Activated T-helper 1 cell treated with anti-CD3 and anti-CD28 coated beads, Interleukin-12 subunit alpha, Interleukin-12 subunit beta, Interleukin-2, Interleukin-4 antibody, amounts not matched to agents 30 ng/mL and 10 ng/mL and 1 ng/mL, durations not matched to agents 14 hours and 24 hours and 36 hours (primary cell): ENCODE measurements at regions of chr11 and their contacts with region 1.

Region 1: DNA sequence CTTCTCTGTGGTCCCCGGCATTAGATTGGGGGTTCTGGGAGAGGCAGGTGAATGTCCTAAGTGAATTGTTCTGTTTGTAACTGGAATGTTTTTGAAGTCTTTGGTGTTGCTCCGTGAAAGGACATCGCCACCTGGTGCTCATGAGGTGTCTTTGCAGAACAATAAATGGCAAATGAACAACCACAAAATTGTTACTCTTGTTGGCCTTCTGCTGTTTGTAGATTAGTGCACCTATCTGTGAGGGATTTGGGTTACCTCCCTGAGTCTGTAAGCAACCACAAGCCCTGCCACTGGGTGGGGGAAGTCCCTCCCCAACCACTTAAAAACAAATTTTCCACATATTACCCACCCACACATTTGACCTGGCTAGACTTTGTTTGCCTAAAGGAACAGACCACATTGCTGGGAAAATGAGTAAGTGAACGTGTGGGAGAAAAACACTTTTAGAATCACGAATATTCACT is 4.7 kb downstream of the MPEG1 start:
- DNase-seq: peak; percentile 4
- H3K4me3 Mint-ChIP-seq: peak overlapping the region; percentile 51
- H3K27ac Mint-ChIP-seq: peak overlapping the region; percentile 83
- H3K4me1 Mint-ChIP-seq: peaks cover 30% of the 10 kb centered on the region
- H3K27me3 Mint-ChIP-seq: peaks cover 52% of the 10 kb centered on the region

Region 2: DNA sequence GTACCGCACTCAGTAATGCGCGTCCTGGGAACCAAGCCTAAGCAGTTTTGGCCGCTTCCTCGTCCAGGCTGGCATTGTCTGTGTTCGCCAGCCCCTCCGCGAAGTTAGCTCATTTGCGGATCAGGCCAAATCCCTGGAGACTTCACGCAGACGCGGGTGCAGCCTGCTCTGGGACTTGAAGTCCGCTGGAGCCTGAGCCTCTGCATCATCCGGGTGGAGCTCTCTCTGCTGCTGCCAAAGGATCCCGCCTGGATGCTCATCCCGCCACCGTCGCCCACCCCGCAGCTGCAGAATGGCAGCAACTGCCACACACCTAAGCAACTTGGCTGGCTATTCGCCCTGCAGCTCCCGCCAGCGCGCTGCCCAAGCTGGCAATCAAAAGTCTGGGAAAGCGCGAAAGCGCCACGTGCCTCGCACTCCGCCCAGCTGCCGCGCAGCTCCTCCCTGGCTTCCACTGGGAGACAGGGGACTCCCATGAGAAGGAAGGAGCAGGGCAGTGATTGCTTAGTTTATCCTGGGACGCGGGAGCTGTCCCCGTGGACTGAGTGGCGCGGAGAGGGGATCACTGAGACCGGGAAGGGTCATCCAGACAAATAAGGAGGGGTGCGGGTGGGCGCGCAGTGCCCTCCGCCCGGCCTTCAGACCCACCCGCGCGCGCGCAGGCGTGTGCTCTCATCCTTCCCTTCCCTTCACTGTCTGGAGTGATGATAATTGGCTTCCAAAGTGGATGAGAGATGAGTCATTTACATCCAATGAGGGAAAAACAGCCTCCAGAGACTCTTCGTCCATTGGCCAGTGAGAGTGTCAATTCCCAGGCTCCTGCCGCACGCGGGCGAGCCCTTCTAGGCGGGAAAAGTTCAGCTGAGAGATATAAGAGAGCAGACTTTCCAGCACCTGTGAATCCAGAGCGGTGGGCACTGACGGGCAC is 145.2 kb before region 1 on chr11:
- intact Hi-C with region 1: no loop called
- DNase-seq: no peak
- H3K4me3 Mint-ChIP-seq: no peak overlapping the region
- H3K27ac Mint-ChIP-seq: no peak overlapping the region
- H3K4me1 Mint-ChIP-seq: peaks cover 9% of the 10 kb centered on the region
- H3K27me3 Mint-ChIP-seq: peaks cover 28% of the 10 kb centered on the region

Region 3: DNA sequence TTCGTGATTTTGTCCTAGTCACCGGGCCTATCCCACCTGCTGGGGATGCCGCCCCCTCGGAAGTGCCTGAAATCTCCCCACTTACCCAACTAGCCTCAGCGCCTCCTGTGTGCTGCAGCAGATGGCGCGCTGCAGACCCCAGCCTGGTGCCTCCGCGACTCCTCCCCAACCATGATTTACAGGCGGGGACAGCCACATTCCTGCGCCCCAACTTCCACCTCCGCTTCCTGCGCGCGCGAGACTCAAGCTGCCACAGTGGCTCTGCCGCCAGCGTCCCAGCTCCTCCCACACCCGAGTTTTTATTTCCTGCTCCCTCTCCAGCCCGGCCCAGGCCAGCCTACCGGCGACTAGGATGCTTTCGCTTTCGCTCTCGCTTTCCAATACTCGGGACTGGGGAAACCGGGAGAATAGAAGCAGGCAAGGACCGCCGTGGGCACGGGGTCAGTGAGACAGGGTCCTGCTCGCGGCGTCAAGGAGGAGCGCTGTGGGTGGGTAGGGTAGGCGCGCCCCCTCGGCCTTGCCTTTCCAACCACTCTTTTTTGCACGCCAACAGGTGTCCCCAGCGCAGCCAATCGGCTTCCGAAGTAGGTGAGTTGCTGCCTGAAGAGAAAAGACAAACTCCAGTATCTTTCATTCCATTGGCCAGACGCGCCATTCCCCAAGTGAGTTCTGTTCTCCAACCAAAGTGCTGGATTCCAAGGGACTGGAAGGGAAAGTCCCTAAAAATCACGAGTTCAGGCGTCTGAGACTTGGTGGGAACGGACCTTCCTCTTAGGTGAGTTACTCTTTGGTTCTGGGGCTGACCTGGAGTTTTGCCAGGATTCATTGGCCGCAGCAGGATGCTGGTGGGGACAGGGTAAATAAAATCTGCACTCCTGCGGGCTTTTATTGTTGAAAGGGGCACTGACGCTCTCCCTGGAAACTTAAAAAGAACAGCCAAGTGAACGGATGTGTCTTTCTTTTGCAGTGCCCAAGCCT is 65.2 kb before region 1 on chr11 and contains the start of gene FAM111A:
- intact Hi-C with region 1: loop called (anchors 2 kb)
- DNase-seq: peak; percentile 88
- H3K4me3 Mint-ChIP-seq: peak within 1 kb of the TSS; percentile 91
- H3K27ac Mint-ChIP-seq: peak within 1 kb of the TSS; percentile 93
- H3K4me1 Mint-ChIP-seq: peaks cover 62% of the 10 kb centered on the region
- H3K27me3 Mint-ChIP-seq: no peaks in the 10 kb centered on the region
- total RNA-seq, gene FAM111A: 64.8 and 66.4 TPM in 2 replicates

Region 4: DNA sequence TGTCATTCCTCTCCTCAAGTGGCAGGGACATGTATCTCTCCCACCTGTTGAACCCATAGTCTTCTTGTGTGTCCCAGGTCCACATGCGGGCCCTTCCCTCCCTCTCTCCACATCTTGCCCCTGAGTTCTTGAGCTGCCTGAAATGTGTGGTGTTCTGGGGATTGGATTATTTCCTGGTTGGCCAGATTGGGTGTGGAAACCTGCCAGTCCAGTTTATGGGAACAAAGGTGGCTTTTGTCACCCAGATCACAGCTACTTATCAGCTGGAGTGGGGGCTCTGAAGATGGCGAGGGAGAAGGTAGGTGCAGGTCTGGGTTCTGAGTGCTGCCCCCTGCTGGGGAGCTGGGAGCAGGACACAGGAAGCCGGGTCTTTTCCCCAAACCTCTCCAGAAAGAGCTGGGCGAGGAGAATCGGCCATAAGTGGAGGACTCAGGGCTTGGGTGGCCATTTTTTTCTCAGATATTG is 21.9 kb before region 1 on chr11:
- intact Hi-C with region 1: loop called (anchors 2 kb)
- DNase-seq: no peak
- H3K4me3 Mint-ChIP-seq: no peak overlapping the region
- H3K27ac Mint-ChIP-seq: no peak overlapping the region
- H3K4me1 Mint-ChIP-seq: no peaks in the 10 kb centered on the region
- H3K27me3 Mint-ChIP-seq: peaks cover 9% of the 10 kb centered on the region